Left cardiac atrium (tissue), 4 donors: ENCODE measurements at regions of chr2 and their contacts with region 1.

Region 1: DNA sequence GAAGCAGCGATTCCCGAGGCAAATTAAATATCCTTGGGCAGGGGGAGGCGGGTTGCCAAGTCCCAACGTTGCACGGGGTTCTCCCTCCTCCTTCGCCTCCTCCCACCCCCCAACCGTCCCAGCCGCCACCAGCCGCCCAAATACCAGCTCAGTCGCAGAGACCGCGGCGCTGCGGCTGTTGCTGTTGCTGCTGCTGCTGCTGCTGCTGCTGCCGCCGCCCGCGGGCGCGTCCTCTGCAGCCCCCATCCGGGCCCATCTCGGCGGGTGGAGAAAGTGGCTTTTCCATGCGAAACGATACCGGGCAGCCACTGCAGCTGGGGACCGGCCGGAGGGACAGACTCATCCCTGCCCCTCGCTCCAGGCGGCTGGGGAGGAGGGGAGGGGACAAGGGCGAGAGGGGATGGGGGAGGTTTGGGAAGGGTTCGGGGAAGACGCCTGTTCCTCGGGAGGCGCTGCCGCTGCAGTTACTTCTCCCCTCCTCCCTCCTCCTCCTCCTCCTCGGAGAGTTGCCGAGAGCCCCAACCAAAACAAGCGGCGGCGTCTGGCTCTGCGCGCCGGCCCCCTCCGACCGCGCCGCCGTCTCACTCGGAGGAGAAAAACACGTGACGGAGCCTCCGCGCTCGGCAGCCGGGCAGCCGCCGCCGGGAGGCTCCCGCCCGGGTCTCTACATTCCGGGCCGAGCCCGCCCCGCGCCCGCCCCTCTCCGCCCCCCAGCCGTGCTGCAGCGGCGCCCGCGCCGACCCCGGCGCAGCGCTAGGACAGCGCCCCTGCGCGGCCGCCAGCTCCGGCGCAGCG is at the start of gene IRS1:
- DNase-seq: peak; percentile 78
- ATAC-seq: peak; percentile 64 to 69
- total RNA-seq, gene IRS1: 13.7 to 15.1 TPM

Region 2: DNA sequence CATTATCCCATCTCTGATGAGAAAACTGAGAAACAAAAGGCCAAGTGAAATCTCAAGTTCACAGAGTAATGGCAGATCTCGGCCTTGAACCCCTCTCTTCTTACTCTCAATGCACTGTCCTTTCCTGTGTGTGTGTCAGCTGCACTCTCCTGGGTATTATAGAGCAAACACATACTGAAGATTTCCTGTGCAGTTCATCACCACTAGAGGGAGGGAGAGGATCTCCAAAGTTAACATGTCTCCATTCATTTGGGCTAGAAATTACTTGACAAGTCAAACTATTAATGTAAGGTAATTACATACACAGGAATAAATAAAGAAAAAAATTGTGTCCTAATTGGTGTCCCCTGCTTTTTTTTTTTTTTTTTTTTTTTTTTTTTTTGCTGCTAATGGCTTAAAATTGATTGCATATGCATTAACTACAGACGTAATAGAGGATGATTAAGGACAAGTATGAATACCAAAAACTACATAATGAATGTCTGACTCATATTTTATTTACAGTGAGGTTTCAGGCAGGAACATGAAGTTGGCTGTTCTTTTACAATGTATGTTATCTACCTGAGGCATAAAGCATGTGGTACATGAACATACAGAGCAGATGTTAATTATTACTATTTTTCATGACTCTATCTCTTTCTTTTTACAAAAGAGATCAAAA is 1130.6 kb before region 1 on chr2:
- intact Hi-C with region 1: loop called in 1 of 2 experiments (anchors 5 kb)
- DNase-seq: no peak
- ATAC-seq: peak; percentile 61 to 68

Region 3: DNA sequence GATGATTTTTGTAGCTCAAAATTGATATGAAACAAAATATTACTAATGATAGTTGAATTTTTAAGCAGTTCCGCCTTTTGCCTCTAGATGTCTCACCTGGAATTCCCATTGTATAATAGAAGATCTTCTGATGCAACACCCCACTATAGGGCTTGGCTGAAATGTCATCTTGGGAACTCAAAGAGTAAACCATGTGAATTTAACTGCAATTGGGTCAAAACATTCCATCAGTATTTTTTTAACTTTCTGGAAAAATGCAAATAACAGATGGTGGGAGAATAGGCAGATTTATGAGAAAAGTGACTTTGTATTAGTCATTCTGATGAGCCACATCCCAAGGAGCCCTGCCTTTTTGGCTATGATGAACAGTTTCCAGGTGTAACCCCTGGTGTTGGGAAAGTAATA is 909.9 kb before region 1 on chr2:
- intact Hi-C with region 1: loop called (anchors 2 to 5 kb)
- DNase-seq: no peak
- ATAC-seq: peak; percentile 57

Region 4: GRCh38 chr2:226215902-226216503 is 583.4 kb before region 1 on chr2:
- intact Hi-C with region 1: loop called (anchors 2 to 5 kb)
- DNase-seq: peak; percentile 55
- ATAC-seq: peak; percentile 74 to 78

Region 5: GRCh38 chr2:226738821-226739544 is 60.4 kb before region 1 on chr2:
- intact Hi-C with region 1: loop called in 1 of 2 experiments (anchors 5 kb)
- DNase-seq: no peak
- ATAC-seq: peak; percentile 33 to 46

Region 6: GRCh38 chr2:226756129-226756528 is 43.2 kb before region 1 on chr2:
- intact Hi-C with region 1: no loop called
- DNase-seq: no peak
- ATAC-seq: peak in 1 of 2 donors; percentile 63

Region 7: DNA sequence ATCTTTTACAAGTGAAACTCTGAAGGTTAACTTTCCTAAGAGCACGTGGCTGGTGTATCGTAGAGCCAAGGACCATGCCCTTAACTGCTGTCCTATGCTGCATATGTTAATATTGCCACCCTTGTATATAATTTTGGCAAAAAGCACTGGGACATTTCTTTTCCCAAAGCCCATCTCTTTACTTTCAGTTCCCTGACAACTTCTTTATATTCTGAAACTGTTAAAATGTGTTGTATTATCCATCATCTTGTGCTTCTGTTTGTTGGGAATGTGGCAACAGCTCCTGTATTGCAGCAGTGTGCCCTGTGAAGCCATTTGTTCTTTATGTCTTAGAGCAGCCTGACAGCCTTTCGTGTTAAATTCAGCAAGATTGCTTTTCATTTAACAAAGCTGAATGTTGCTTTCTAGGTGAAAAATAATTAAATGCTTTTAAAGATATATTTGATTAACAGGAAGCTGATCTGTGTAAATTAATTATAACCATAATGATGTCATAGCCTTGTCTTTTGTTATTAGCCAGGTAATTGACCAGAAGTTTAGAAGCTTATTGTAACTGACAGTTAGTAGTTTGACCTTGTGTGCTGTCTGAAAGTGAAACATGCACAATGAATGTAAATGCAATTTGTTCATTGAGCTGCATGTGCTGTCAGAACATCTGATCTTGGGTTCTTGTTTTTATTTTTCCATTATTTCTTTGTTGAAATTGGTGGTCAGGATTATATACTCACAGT is 46.2 kb after region 1 on chr2:
- intact Hi-C with region 1: no loop called
- DNase-seq: no peak
- ATAC-seq: no peak

Region 8: DNA sequence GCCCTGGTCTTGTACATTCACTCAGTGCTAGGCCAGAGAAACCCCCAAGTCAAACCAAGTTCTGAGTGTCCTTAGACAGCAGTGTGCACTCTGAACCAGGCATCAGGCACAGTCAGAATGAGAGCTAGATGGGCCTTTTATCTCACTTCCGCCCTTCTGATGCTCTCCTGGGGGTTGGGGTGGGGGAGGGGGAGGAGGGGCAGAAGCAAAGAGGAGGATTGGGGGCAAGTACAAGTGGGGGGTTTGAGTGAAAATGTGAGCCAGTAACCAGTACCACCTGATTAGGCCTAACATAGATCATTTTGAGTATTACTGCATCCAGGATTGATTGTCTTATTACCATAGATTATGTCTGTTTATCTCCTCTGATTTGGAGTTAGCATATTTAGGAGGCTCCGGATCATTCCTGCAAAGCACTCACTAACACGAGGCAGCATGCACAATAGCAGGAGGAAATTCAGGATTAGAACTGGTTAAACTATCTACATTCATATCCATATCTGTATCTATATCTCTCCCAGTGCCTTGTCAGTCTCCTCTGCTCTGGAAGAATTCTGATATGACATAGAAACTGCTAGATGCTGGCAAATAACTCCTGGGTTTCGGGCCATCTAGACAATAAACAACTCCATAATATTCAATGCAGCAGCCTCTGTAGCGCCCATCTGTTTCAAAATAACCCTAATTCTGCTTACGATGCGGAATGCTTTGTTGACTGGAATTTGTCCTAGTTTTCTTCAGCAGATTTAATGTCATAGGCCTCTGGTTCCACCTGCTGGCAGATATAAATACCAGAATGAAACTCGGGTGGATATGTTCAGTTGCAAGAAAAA is 185.6 kb after region 1 on chr2:
- intact Hi-C with region 1: loop called in 1 of 2 experiments (anchors 2 kb)
- DNase-seq: no peak
- ATAC-seq: peak; percentile 65 to 84

Region 9: GRCh38 chr2:227370791-227371312 is 571.5 kb after region 1 on chr2:
- intact Hi-C with region 1: no loop called
- DNase-seq: peak; percentile 46
- ATAC-seq: peak in 1 of 2 donors; percentile 77